ENCODE measurements at regions of chr3 and their contacts with region 1.

Region 1: DNA sequence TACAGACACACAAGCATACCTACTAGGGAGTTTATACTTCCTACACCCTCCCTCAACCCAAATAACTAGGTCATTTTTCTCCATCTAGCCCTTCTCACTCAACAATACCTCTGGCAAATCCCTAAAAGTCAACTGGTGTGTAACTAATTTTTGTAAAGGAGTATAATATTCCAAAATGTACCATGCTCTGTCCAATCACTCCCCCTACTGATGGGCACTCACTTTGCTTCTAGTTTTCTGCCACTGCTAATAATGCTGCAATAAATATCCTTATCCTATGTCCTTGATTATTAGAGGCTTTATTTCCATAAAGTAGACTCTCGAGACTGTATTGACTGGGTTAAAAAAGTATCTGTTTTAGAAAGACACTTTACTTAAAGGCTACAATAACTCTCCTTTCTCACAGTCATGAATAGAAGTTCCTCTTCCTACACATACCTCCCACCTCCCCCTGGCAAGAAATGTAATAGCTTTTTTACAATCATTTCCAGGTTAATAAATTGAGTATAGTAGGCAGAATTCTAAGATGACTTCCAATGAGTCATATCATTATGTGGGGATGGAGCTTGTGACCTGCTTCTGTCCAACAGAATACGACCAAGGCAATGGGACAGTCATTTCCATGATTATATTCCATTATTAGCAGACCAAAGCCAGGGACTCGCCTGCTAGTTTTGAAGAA is 30.0 kb downstream of the SHQ1 start:
- DNase-seq: no peak
- ATAC-seq: no peak
- H3K4me3 ChIP-seq: no peak overlapping the region
- H3K27ac ChIP-seq: 0 out of 2 replicates have a peak overlapping the region, but pooled peaks have one; percentile 13
- H3K4me1 ChIP-seq: peaks cover 47% of the 10 kb centered on the region
- H3K27me3 ChIP-seq: no peaks in the 10 kb centered on the region
- CTCF ChIP-seq: peak; percentile 43 to 74 (median 53)
- EP300 ChIP-seq: no peak
- POLR2A ChIP-seq: no peak
- RAD21 ChIP-seq: peak; percentile 77

Region 2: DNA sequence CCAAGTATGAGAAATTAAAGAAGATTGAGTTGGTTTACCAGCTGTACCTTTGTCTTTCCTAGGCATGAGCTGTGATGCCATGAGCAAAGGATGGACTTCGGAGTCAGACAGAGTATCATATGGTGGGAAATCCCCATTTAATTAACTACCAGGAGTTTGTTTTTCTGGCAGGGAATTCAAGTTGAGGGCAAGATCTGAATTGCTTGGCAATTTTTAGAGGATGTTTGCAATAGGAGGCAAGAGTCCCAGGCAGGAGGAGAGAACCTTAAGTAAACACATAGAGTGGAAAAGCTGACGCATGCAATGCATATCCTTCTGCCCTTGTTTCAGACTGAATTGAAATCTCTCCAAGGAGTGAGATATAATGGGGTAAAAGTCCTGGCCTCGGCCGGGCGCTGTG is 1936.1 kb before region 1 on chr3:
- CTCF ChIA-PET with region 1: no interaction called
- POLR2A ChIA-PET with region 1: no interaction called
- RAD21 ChIA-PET with region 1: no interaction called
- SMC1A ChIA-PET with region 1: no interaction called
- in situ Hi-C with region 1: no loop called
- intact Hi-C with region 1: no loop called
- DNase-seq: no peak
- ATAC-seq: no peak
- H3K4me3 ChIP-seq: no peak overlapping the region
- H3K27ac ChIP-seq: no peak overlapping the region
- H3K4me1 ChIP-seq: no peaks in the 10 kb centered on the region
- H3K27me3 ChIP-seq: no peaks in the 10 kb centered on the region
- CTCF ChIP-seq: no peak
- EP300 ChIP-seq: no peak
- POLR2A ChIP-seq: no peak
- RAD21 ChIP-seq: no peak

Region 3: DNA sequence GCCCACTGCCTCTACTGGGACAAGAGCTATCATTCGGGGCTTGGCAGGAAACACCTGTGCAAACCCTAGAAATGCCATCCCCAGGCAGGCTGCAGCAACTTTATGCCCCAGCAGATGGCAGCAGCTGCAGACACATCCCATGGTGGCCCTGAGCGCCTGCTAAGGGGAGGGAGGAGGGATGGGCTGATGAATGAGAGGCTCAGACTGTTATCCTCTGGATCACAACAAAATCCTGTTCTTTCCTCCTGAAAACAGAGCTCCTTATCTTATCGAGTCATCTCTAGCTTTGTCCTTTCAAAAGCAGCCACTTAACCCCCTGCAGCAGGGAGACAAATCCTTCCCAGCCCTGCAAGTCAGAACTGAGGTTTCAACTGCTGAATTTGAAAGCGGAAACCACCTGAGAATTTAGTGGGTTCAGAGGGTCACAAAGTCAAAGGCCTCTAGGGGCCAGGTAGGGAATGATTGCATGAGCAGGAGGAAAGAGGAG is 942.7 kb before region 1 on chr3:
- CTCF ChIA-PET with region 1: interaction called, 122 read pairs
- POLR2A ChIA-PET with region 1: no interaction called
- RAD21 ChIA-PET with region 1: interaction called, 20 read pairs
- SMC1A ChIA-PET with region 1: interaction called, 36 read pairs
- in situ Hi-C with region 1: no loop called
- intact Hi-C with region 1: loop called (anchors 1 kb)
- DNase-seq: peak; percentile 50
- ATAC-seq: peak; percentile 98
- H3K4me3 ChIP-seq: no peak overlapping the region
- H3K27ac ChIP-seq: no peak overlapping the region
- H3K4me1 ChIP-seq: peaks cover 19% of the 10 kb centered on the region
- H3K27me3 ChIP-seq: no peaks in the 10 kb centered on the region
- CTCF ChIP-seq: peak; percentile 91 to 96 (median 96); a peak in 5 of 6 replicates
- EP300 ChIP-seq: no peak; a peak in 1 of 4 replicates
- POLR2A ChIP-seq: no peak
- RAD21 ChIP-seq: peak; percentile 93

Region 4: DNA sequence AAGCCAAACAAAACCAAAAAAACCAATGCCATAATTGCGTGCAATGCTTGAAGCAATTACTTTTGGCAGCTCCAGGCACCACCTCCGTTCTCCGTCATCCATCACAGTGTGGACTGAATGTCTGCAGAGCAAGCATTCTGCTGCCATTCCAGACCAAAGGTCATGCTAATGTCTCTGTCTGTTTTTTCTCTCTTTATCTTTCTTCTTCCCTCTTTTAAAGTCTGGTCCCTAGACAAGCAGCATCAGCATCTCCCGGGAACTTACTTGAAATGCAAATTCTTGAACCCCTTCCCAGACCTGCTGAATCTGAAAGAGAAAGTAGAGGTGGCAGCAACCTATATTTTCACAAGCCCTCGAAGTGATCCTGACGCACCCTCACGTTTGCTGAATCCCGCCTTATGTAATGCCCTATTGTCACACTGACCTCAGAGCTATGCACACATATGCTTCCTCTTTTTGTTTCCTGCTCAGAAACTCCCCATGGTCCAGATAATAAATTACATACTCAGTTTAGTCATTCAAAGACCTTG is 736.0 kb before region 1 on chr3:
- CTCF ChIA-PET with region 1: interaction called, 6 read pairs
- POLR2A ChIA-PET with region 1: no interaction called
- RAD21 ChIA-PET with region 1: interaction called, 4 read pairs
- SMC1A ChIA-PET with region 1: interaction called, 3 read pairs
- in situ Hi-C with region 1: no loop called
- intact Hi-C with region 1: loop called (anchors 5 kb)
- DNase-seq: peak; percentile 80
- ATAC-seq: peak; percentile 79
- H3K4me3 ChIP-seq: peak overlapping the region; percentile 33; the same call in 1 of the 2 replicates
- H3K27ac ChIP-seq: peak overlapping the region; percentile 78
- H3K4me1 ChIP-seq: peaks cover 71% of the 10 kb centered on the region
- H3K27me3 ChIP-seq: no peaks in the 10 kb centered on the region
- CTCF ChIP-seq: no peak
- EP300 ChIP-seq: peak; percentile 46 to 69; a peak in 2 of 4 replicates
- POLR2A ChIP-seq: no peak
- RAD21 ChIP-seq: no peak

Region 5: GRCh38 chr3:72426618-72427397 is 391.4 kb before region 1 on chr3:
- CTCF ChIA-PET with region 1: interaction called, 3 read pairs
- POLR2A ChIA-PET with region 1: no interaction called
- RAD21 ChIA-PET with region 1: interaction called, 3 read pairs
- SMC1A ChIA-PET with region 1: no interaction called
- in situ Hi-C with region 1: no loop called
- intact Hi-C with region 1: loop called (anchors 5 kb)
- DNase-seq: no peak
- ATAC-seq: peak; percentile 76
- H3K4me3 ChIP-seq: 0 out of 2 replicates have a peak overlapping the region, but pooled peaks have one; percentile 27
- H3K27ac ChIP-seq: peak overlapping the region; percentile 37; the same call in 1 of the 2 replicates
- H3K4me1 ChIP-seq: peaks cover 28% of the 10 kb centered on the region
- H3K27me3 ChIP-seq: no peaks in the 10 kb centered on the region
- CTCF ChIP-seq: no peak
- EP300 ChIP-seq: no peak
- POLR2A ChIP-seq: no peak
- RAD21 ChIP-seq: no peak

Region 6: GRCh38 chr3:72679540-72680198 is 138.6 kb before region 1 on chr3:
- CTCF ChIA-PET with region 1: interaction called, 4 read pairs
- POLR2A ChIA-PET with region 1: interaction called, 4 read pairs
- RAD21 ChIA-PET with region 1: interaction called, 7 read pairs
- SMC1A ChIA-PET with region 1: interaction called, 15 read pairs
- in situ Hi-C with region 1: no loop called
- intact Hi-C with region 1: loop called (anchors 5 kb)
- DNase-seq: no peak
- ATAC-seq: peak; percentile 32
- H3K4me3 ChIP-seq: no peak overlapping the region
- H3K27ac ChIP-seq: no peak overlapping the region
- H3K4me1 ChIP-seq: peaks cover 39% of the 10 kb centered on the region
- H3K27me3 ChIP-seq: no peaks in the 10 kb centered on the region
- CTCF ChIP-seq: no peak
- EP300 ChIP-seq: peak; percentile 20 to 49; a peak in 2 of 4 replicates
- POLR2A ChIP-seq: no peak
- RAD21 ChIP-seq: no peak

Region 7: GRCh38 chr3:72996473-72997333 is 178.5 kb after region 1 on chr3 and contains the start of gene PPP4R2:
- CTCF ChIA-PET with region 1: no interaction called
- POLR2A ChIA-PET with region 1: no interaction called
- RAD21 ChIA-PET with region 1: interaction called, 3 read pairs
- SMC1A ChIA-PET with region 1: interaction called, 10 read pairs
- in situ Hi-C with region 1: no loop called
- intact Hi-C with region 1: no loop called
- DNase-seq: peak; percentile 55
- ATAC-seq: peak; percentile 90
- H3K4me3 ChIP-seq: peak within 1 kb of the TSS; percentile 96
- H3K27ac ChIP-seq: peak within 1 kb of the TSS; percentile 90
- H3K4me1 ChIP-seq: peaks cover 4% of the 10 kb centered on the region
- H3K27me3 ChIP-seq: no peaks in the 10 kb centered on the region
- CTCF ChIP-seq: no peak
- EP300 ChIP-seq: no peak
- POLR2A ChIP-seq: peak; percentile 97
- RAD21 ChIP-seq: no peak
- polyA plus RNA-seq, gene PPP4R2: 16.7 to 22.1 TPM